ENCODE measurements at regions of chr9 and their contacts with region 1.

Region 1: GRCh38 chr9:1732670-1733069 is 282.5 kb upstream of the SMARCA2 start:
- DNase-seq: peak; percentile 36
- H3K4me3 Mint-ChIP-seq: no peak overlapping the region
- H3K27ac Mint-ChIP-seq: no peak overlapping the region
- H3K4me1 Mint-ChIP-seq: no peaks in the 10 kb centered on the region
- H3K27me3 Mint-ChIP-seq: peaks cover 50% of the 10 kb centered on the region
- CTCF ChIP-seq: peak; percentile 36

Region 2: GRCh38 chr9:1709345-1709744 is 23.3 kb before region 1 on chr9:
- CTCF ChIA-PET with region 1: interaction called, 10 read pairs
- POLR2A ChIA-PET with region 1: no interaction called
- intact Hi-C with region 1: no loop called
- DNase-seq: peak; percentile 45
- H3K4me3 Mint-ChIP-seq: no peak overlapping the region
- H3K27ac Mint-ChIP-seq: no peak overlapping the region
- H3K4me1 Mint-ChIP-seq: peaks cover 17% of the 10 kb centered on the region
- H3K27me3 Mint-ChIP-seq: no peaks in the 10 kb centered on the region
- CTCF ChIP-seq: peak; percentile 16

Region 3: GRCh38 chr9:1721196-1721595 is 11.5 kb before region 1 on chr9:
- CTCF ChIA-PET with region 1: interaction called, 10 read pairs
- POLR2A ChIA-PET with region 1: no interaction called
- intact Hi-C with region 1: no loop called
- DNase-seq: no peak
- H3K4me3 Mint-ChIP-seq: no peak overlapping the region
- H3K27ac Mint-ChIP-seq: no peak overlapping the region
- H3K4me1 Mint-ChIP-seq: no peaks in the 10 kb centered on the region
- H3K27me3 Mint-ChIP-seq: peaks cover 6% of the 10 kb centered on the region
- CTCF ChIP-seq: no peak

Region 4: DNA sequence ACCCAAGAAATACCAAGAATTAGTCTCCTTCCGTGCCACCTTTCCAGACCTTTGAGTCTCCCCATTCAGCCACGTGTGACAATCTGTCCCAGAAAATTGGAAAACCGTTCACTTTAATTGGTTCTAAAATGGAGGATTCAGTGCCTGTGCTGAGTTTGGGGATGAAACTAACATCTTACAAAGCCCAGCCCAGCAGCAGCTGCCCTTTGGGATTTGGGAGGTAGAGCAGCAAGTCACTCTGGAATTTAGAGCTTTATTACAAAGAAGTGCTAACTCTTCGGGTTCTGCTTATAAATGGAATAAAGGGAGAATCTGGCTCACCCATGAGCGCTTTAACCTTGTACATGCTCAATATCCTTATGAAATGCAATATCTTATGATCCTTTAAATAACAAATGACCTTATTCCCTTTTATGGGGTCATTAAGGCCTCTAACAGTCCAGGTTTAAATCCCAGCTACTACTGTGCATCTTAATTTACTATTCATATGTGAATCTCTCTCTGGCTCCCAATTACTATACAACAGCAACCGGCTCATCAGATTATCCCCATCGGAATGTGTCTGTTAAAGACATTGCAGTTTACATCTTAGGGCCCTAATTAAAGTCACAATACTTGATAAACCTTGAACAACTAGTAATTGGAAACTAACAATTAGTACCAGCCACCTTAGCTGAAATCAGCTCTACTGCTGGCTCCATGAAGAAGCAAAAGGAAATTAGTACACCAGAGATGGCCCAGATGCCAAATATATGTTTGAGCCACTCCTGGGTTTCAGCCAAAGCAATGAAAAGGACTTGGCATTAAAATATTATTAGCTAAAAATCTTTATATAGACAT is 10.7 kb after region 1 on chr9:
- CTCF ChIA-PET with region 1: interaction called, 22 read pairs
- POLR2A ChIA-PET with region 1: no interaction called
- intact Hi-C with region 1: no loop called
- DNase-seq: no peak
- H3K4me3 Mint-ChIP-seq: no peak overlapping the region
- H3K27ac Mint-ChIP-seq: no peak overlapping the region
- H3K4me1 Mint-ChIP-seq: no peaks in the 10 kb centered on the region
- H3K27me3 Mint-ChIP-seq: no peaks in the 10 kb centered on the region
- CTCF ChIP-seq: no peak

Measured in MCF 10A (cell line).